Activated naive CD4-positive, alpha-beta T cell treated with anti-CD3 and anti-CD28 coated beads for 36 hours (primary cell): ENCODE measurements at regions of chr2 and their contacts with region 1.

Region 1: GRCh38 chr2:190929919-190930318 is 49.3 kb downstream of the GLS start:
- DNase-seq: no peak
- H3K4me3 Mint-ChIP-seq: no peak overlapping the region
- H3K27ac Mint-ChIP-seq: peak overlapping the region; percentile 28
- H3K4me1 Mint-ChIP-seq: peaks cover 22% of the 10 kb centered on the region
- H3K27me3 Mint-ChIP-seq: no peaks in the 10 kb centered on the region

Region 2: GRCh38 chr2:190965580-190966222 is 35.8 kb after region 1 on chr2:
- CTCF ChIA-PET with region 1: no interaction called
- intact Hi-C with region 1: loop called (anchors 5 kb)
- DNase-seq: no peak
- H3K4me3 Mint-ChIP-seq: no peak overlapping the region
- H3K27ac Mint-ChIP-seq: peak overlapping the region; percentile 46
- H3K4me1 Mint-ChIP-seq: peaks cover 31% of the 10 kb centered on the region
- H3K27me3 Mint-ChIP-seq: no peaks in the 10 kb centered on the region